B cell (primary cell): ENCODE measurements at regions of chr19 and their contacts with region 1.

Region 1: GRCh38 chr19:18408053-18408476 is 10.6 kb upstream of the LRRC25 start:
- DNase-seq: peak; percentile 90
- ATAC-seq: peak; percentile 90
- H3K4me3 ChIP-seq: no peak overlapping the region
- H3K4me3 Mint-ChIP-seq: peak overlapping the region; percentile 44
- H3K27ac ChIP-seq: peak overlapping the region in 1 of 2 donors; percentile 15
- H3K27ac Mint-ChIP-seq: peak overlapping the region; percentile 89
- H3K4me1 ChIP-seq: peaks cover 18 to 19% of the 10 kb centered on the region in 2 donors
- H3K4me1 Mint-ChIP-seq: peaks cover 23% of the 10 kb centered on the region
- H3K27me3 ChIP-seq: peaks cover 0 to 20% (median 7%) of the 10 kb centered on the region in 4 experiments
- H3K27me3 Mint-ChIP-seq: peaks cover 18% of the 10 kb centered on the region
- CTCF ChIP-seq: peak; percentile 31

Region 2: GRCh38 chr19:18152444-18152816 is 255.6 kb before region 1 on chr19:
- CTCF ChIA-PET with region 1: no interaction called
- POLR2A ChIA-PET with region 1: no interaction called
- intact Hi-C with region 1: no loop called
- DNase-seq: peak; percentile 100
- ATAC-seq: peak; percentile 71
- H3K4me3 ChIP-seq: peak overlapping the region; percentile 63 to 88 (median 70)
- H3K4me3 Mint-ChIP-seq: peak overlapping the region; percentile 89
- H3K27ac ChIP-seq: peak overlapping the region; percentile 90 to 93
- H3K27ac Mint-ChIP-seq: peak overlapping the region; percentile 95
- H3K4me1 ChIP-seq: peaks cover 14 to 25% of the 10 kb centered on the region in 2 donors
- H3K4me1 Mint-ChIP-seq: peaks cover 23% of the 10 kb centered on the region
- H3K27me3 ChIP-seq: no peaks in the 10 kb centered on the region
- H3K27me3 Mint-ChIP-seq: no peaks in the 10 kb centered on the region
- CTCF ChIP-seq: peak; percentile 88

Region 3: DNA sequence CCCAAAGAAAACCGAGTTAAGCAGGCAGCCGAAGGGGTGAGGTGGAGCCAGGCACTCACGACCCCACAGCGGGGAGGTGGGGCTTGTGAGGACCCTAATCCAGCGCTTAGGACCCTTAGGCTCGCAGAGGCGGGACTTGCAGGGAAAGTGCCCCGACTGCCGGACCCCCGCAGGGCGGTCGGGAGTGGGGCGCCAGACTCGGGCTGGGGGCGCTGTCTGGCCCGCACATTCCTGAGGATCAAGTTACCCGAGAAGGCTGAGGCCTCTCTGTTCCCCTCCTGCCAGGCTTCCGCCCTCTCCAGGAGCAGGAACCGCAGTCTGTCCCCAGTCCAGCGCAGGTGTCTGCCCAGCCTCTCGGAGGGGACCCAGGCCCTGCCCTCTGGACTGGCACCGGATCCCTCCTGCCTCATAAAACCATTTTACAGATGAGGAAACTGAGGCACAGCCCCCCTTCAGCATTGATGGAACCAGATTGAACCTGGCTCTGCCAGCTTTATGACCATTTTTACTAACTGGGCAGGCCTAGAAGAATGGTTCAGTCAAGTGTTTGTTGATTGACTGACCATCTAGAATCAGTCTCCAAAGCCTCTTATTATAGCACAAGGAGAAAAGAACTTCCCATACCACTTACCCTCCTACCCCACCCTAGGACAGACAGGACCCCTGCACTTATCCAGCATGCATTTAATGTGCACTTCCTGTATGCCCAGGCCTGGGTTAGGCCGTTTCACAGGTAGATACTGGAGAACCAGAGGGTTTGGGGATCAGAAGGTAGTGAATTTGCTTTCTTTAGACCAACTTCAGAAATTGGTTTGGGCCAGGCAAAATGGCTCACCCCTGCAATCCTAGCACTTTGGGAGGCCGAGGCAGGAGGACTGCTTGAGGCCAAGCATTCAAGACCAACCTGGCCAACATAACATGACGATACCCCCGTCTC is 120.0 kb before region 1 on chr19:
- CTCF ChIA-PET with region 1: no interaction called
- POLR2A ChIA-PET with region 1: no interaction called
- intact Hi-C with region 1: no loop called
- DNase-seq: no peak
- ATAC-seq: no peak
- H3K4me3 ChIP-seq: no peak overlapping the region
- H3K4me3 Mint-ChIP-seq: no peak overlapping the region
- H3K27ac ChIP-seq: no peak overlapping the region
- H3K27ac Mint-ChIP-seq: peak overlapping the region; percentile 32
- H3K4me1 ChIP-seq: peaks cover 40 to 64% of the 10 kb centered on the region in 2 donors
- H3K4me1 Mint-ChIP-seq: peaks cover 52% of the 10 kb centered on the region
- H3K27me3 ChIP-seq: no peaks in the 10 kb centered on the region
- H3K27me3 Mint-ChIP-seq: no peaks in the 10 kb centered on the region
- CTCF ChIP-seq: no peak

Region 4: DNA sequence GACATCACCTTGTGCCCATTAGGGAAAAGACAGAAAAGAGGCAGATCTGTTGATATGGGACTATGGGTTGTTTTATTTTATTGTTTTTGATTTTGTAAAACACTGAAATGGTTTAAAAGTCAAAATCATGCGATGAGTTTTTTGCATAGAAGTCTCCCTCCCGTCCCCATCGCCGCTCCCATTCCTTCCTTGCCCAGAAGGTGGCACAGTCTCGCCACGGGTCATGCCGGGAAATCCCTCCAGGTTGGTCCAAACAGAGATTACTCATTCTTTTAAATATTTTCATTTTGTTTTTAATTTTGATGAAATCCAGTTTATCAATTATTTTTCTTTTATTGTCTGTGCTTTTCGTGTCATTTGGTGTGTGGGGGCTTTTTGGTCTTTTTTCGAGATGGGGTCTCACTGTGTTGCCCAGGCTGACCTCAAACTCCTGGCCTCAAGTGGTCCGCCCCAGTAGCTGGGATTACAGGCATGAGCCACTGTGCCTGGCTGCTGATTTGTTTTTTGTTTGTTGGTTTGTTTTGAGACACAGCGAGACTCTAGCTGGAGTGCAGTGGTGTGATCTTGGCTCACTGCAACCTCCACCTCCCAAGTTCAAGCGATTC is 58.4 kb before region 1 on chr19:
- CTCF ChIA-PET with region 1: interaction called, 49 read pairs
- POLR2A ChIA-PET with region 1: no interaction called
- intact Hi-C with region 1: loop called (anchors 1 kb)
- DNase-seq: peak; percentile 40
- ATAC-seq: peak; percentile 61
- H3K4me3 ChIP-seq: no peak overlapping the region
- H3K4me3 Mint-ChIP-seq: no peak overlapping the region
- H3K27ac ChIP-seq: no peak overlapping the region
- H3K27ac Mint-ChIP-seq: no peak overlapping the region
- H3K4me1 ChIP-seq: no peaks in the 10 kb centered on the region
- H3K4me1 Mint-ChIP-seq: no peaks in the 10 kb centered on the region
- H3K27me3 ChIP-seq: no peaks in the 10 kb centered on the region
- H3K27me3 Mint-ChIP-seq: no peaks in the 10 kb centered on the region
- CTCF ChIP-seq: peak; percentile 51

Region 5: DNA sequence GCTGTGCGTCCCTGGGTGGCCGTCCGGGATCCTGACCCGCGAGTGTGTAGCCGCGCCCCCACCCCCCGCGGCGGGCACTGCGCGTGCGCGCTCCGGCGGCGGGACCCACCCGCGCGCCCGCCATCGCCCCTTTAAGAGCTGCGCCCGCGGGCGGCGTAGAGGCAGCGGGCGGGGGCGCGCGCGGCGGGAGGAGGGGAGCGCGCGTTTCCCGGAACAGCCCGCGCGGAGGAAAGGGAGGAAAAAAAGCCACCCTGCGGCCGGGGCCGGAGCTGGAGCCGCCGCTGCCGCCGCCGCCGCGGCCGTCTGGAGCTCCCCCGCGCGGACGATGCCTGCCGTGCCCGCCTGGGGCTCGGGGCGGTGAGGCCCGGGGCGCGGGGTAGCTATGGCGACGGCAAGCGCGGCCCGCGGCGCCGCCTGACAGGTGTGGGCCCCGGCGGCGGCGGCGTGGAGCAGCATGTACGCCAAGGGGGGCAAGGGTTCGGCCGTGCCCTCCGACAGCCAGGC is 11.2 kb after region 1 on chr19 and contains the start of gene SSBP4:
- CTCF ChIA-PET with region 1: interaction called, 10 read pairs
- POLR2A ChIA-PET with region 1: interaction called, 5 read pairs
- intact Hi-C with region 1: no loop called
- DNase-seq: peak; percentile 88
- ATAC-seq: peak; percentile 64
- H3K4me3 ChIP-seq: peak within 1 kb of the TSS in 4 of 5 experiments; percentile 41 to 67 (median 52)
- H3K4me3 Mint-ChIP-seq: peak within 1 kb of the TSS; percentile 85
- H3K27ac ChIP-seq: no peak within 1 kb of the TSS
- H3K27ac Mint-ChIP-seq: peak within 1 kb of the TSS; percentile 71
- H3K4me1 ChIP-seq: peaks cover 70 to 77% of the 10 kb centered on the region in 2 donors
- H3K4me1 Mint-ChIP-seq: peaks cover 66% of the 10 kb centered on the region
- H3K27me3 ChIP-seq: peaks cover 0 to 50% (median 31%) of the 10 kb centered on the region in 4 experiments
- H3K27me3 Mint-ChIP-seq: peaks cover 31% of the 10 kb centered on the region
- CTCF ChIP-seq: peak; percentile 55
- total RNA-seq, gene SSBP4: 37.0 and 43.5 TPM in 2 replicates